MCF 10A (cell line): ENCODE measurements at regions of chr5 and their contacts with region 1.

Region 1: GRCh38 chr5:106116689-106117088 is 1554.0 kb downstream of the EFNA5 start:
- DNase-seq: no peak
- H3K4me3 Mint-ChIP-seq: no peak overlapping the region
- H3K27ac Mint-ChIP-seq: no peak overlapping the region
- H3K4me1 Mint-ChIP-seq: no peaks in the 10 kb centered on the region
- H3K27me3 Mint-ChIP-seq: no peaks in the 10 kb centered on the region
- CTCF ChIP-seq: no peak

Region 2: GRCh38 chr5:104763216-104763615 is 1353.5 kb before region 1 on chr5:
- CTCF ChIA-PET with region 1: no interaction called
- POLR2A ChIA-PET with region 1: no interaction called
- intact Hi-C with region 1: loop called (anchors 5 kb)
- DNase-seq: no peak
- H3K4me3 Mint-ChIP-seq: no peak overlapping the region
- H3K27ac Mint-ChIP-seq: no peak overlapping the region
- H3K4me1 Mint-ChIP-seq: no peaks in the 10 kb centered on the region
- H3K27me3 Mint-ChIP-seq: no peaks in the 10 kb centered on the region
- CTCF ChIP-seq: no peak

Region 3: DNA sequence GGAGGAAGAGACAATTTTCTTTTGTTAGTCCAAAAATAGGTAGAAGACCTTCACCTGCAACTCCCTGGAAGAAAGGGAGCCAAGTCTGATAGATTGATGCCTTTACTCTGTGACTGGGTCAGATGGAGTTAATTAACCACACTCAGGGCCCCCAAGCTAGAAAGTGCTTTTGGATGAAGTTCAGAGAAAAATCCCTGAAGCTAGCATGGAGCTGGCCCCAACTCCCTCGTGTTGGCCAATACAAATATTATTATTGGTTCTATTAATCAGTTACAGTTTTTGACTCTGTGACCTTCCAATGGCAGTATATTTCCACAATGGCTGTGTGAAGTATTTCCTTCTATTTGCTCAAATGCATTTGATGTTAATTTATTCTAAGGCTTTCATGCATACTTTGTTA is 199.5 kb before region 1 on chr5:
- CTCF ChIA-PET with region 1: no interaction called
- POLR2A ChIA-PET with region 1: no interaction called
- intact Hi-C with region 1: no loop called
- DNase-seq: no peak
- H3K4me3 Mint-ChIP-seq: no peak overlapping the region
- H3K27ac Mint-ChIP-seq: no peak overlapping the region
- H3K4me1 Mint-ChIP-seq: no peaks in the 10 kb centered on the region
- H3K27me3 Mint-ChIP-seq: no peaks in the 10 kb centered on the region
- CTCF ChIP-seq: no peak

Region 4: GRCh38 chr5:106435185-106435584 is 318.5 kb after region 1 on chr5:
- CTCF ChIA-PET with region 1: no interaction called
- POLR2A ChIA-PET with region 1: no interaction called
- intact Hi-C with region 1: no loop called
- DNase-seq: no peak
- H3K4me3 Mint-ChIP-seq: no peak overlapping the region
- H3K27ac Mint-ChIP-seq: no peak overlapping the region
- H3K4me1 Mint-ChIP-seq: no peaks in the 10 kb centered on the region
- H3K27me3 Mint-ChIP-seq: no peaks in the 10 kb centered on the region
- CTCF ChIP-seq: no peak